Posterior vena cava (tissue), 2 donors: ENCODE measurements at regions of chr6 and their contacts with region 1.

Region 1: GRCh38 chr6:140160494-140160893 is 786.0 kb upstream of the CITED2 start:
- DNase-seq: no peak

Region 2: DNA sequence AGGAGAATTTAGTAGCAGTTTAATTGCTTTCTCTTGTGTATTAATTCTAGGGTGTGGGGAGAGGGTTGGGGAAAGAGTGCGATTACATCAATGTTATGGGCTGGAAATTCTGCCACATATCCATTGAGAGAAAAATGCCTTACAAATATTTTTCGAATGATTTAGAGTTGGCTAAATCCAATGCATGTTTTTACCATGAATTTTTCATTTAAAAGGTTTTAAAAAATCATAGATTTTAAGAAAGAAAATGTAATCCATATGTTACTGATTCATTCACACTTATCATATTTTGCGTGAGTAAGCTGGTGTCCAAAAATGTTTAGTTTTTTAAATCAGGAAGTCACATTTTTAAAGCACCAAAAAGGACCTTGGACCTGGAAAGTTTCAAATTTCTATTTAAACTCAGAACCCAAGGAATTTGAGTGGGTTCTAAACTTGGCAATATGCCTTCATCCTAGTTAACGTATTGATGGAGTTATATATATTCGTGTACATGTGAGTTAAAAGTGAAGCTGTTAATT is 158.6 kb before region 1 on chr6:
- intact Hi-C with region 1: loop called in 1 of 2 experiments (anchors 5 kb)
- DNase-seq: no peak